ENCODE measurements at regions of chr18 and their contacts with region 1.

Region 1: GRCh38 chr18:46084431-46084830 is 12.4 kb upstream of the PSTPIP2 start:
- DNase-seq: no peak
- H3K4me3 Mint-ChIP-seq: no peak overlapping the region
- H3K27ac Mint-ChIP-seq: no peak overlapping the region
- H3K4me1 Mint-ChIP-seq: no peaks in the 10 kb centered on the region
- H3K27me3 Mint-ChIP-seq: no peaks in the 10 kb centered on the region
- CTCF ChIP-seq: no peak

Region 2: GRCh38 chr18:46097801-46098615 is 13.6 kb after region 1 on chr18 and contains the start of gene ATP5F1A:
- CTCF ChIA-PET with region 1: interaction called, 3 read pairs
- POLR2A ChIA-PET with region 1: interaction called, 10 read pairs
- intact Hi-C with region 1: no loop called
- DNase-seq: peak; percentile 79
- H3K4me3 Mint-ChIP-seq: peak within 1 kb of the TSS; percentile 91
- H3K27ac Mint-ChIP-seq: peak within 1 kb of the TSS; percentile 93
- H3K4me1 Mint-ChIP-seq: peaks cover 5% of the 10 kb centered on the region
- H3K27me3 Mint-ChIP-seq: no peaks in the 10 kb centered on the region
- CTCF ChIP-seq: no peak
- total RNA-seq, gene ATP5F1A: 363 and 458 TPM in 2 replicates

Region 3: DNA sequence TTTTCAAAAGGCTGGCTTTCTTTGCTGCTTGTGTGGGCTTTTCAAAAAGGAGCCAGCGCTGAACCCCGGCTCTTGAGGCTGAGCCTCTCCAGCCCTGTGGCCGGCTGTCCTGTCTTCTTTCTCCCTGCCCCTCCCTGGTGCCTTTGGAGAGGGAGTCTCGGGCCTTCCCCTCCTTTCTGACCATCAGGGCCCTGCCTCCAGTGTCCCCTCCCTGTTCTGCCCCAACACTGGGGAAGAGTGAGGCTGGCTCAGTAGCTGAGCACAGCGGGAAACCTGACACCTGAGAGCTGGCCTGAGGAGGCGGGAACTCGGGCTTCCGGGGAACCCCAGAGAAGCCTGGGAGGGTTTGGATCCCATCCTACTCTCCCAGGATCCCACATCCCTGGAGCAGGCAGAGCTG is 340.5 kb after region 1 on chr18:
- CTCF ChIA-PET with region 1: no interaction called
- POLR2A ChIA-PET with region 1: no interaction called
- intact Hi-C with region 1: no loop called
- DNase-seq: peak; percentile 63
- H3K4me3 Mint-ChIP-seq: no peak overlapping the region
- H3K27ac Mint-ChIP-seq: no peak overlapping the region
- H3K4me1 Mint-ChIP-seq: peaks cover 22% of the 10 kb centered on the region
- H3K27me3 Mint-ChIP-seq: no peaks in the 10 kb centered on the region
- CTCF ChIP-seq: no peak

Measured in MCF 10A (cell line).